Tibial artery (tissue), 4 donors: ENCODE measurements at regions of chr7 and their contacts with region 1.

Region 1: DNA sequence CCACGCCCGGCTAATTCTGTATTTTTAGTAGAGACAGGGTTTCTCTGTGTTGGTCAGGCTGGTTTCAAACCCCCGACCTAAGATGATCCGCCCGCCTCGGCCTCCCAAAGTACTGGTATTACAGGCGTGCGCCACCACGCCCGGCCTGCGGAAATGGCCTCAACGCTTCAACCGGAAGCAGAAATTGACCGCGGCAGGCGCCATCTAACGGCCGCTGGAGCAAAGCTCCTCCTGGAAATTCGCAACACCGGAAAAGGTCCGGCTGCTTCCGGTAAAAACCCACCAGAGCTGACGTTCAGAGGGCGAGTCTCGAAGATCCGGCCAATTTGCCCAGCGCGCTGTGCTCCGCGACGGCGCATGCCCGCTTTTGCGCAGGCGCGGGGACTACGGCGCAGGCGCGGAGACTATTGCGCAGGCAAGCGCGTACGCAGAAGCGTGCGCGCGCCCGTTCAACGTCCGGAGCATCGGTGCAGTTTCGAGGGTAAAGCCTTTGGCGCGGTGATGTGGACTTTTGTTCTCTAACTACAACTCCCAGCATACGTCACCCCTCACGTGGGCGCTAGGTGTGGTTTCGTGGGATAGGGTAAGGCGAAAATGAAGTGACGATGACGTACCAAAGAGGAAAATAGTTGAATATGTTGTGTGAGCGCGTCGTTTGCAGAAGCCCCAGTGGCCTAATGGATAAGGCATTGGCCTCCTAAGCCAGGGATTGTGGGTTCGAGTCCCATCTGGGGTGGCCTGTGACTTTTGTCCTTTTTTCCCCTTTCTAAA is 915 bp upstream of the FMC1 start:
- DNase-seq: peak; percentile 100
- H3K4me3 ChIP-seq: peak overlapping the region; percentile 72 to 88
- H3K27ac ChIP-seq: peak overlapping the region; percentile 99 to 100
- H3K4me1 ChIP-seq: peaks cover 0 to 13% (median 12%) of the 10 kb centered on the region in 4 donors
- H3K27me3 ChIP-seq: no peaks in the 10 kb centered on the region
- CTCF ChIP-seq: peak; percentile 44 to 66

Region 2: DNA sequence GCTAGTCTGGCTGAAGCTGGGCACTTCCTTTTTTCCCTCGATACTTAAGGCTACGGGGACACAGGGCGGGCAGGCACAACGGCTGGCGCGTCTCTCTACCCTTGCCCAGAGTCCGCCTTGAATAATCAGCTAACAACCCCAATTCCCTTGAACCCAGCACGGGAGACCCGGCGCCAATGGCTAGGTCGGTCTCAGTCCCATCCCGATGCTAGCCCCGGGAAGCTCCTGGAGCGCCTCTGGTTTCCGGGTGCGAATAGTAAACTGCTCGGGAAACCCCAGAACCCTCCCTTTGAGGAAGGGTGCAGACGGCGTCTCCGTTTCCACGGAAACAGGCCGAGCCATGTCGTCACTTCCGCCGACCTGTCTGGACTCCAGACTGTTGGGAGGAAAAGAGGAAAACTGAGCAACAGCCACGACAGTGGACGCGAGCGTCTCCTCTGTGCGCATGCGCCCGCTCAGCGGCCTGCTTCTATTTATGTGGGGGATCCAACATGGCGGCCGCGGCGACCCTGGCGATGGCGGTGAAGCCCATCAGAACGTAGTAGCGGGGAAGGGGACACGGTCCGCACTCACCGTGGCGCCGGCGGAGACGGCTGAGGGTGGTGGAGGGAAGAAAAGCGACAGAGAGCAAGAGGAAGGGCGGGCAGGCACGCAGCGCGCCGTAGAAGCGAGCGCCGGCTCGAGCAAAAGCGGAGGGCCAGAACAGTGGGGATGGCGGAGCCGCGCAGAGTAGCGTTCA is 109.3 kb before region 1 on chr7 and contains the start of gene UBN2:
- intact Hi-C with region 1: loop called (anchors 5 kb)
- DNase-seq: peak; percentile 96 to 98
- H3K4me3 ChIP-seq: peak within 1 kb of the TSS; percentile 70 to 91
- H3K27ac ChIP-seq: peak within 1 kb of the TSS; percentile 90 to 93
- H3K4me1 ChIP-seq: peaks cover 0 to 36% (median 12%) of the 10 kb centered on the region in 4 donors
- H3K27me3 ChIP-seq: no peaks in the 10 kb centered on the region
- CTCF ChIP-seq: no peak